Activated CD8-positive, alpha-beta T cell treated with anti-CD3 and anti-CD28 coated beads for 36 hours (primary cell): ENCODE measurements at regions of chr2 and their contacts with region 1.

Region 1: GRCh38 chr2:206783718-206784117 is 18.3 kb downstream of the FASTKD2 start:
- DNase-seq: no peak
- ATAC-seq: peak; percentile 42
- H3K4me3 Mint-ChIP-seq: no peak overlapping the region
- H3K27ac Mint-ChIP-seq: no peak overlapping the region
- H3K4me1 Mint-ChIP-seq: peaks cover 21% of the 10 kb centered on the region
- H3K27me3 Mint-ChIP-seq: no peaks in the 10 kb centered on the region
- CTCF ChIP-seq: no peak

Region 2: GRCh38 chr2:206378835-206379234 is 404.9 kb before region 1 on chr2:
- CTCF ChIA-PET with region 1: no interaction called
- POLR2A ChIA-PET with region 1: no interaction called
- intact Hi-C with region 1: no loop called
- DNase-seq: no peak
- ATAC-seq: no peak
- H3K4me3 Mint-ChIP-seq: no peak overlapping the region
- H3K27ac Mint-ChIP-seq: no peak overlapping the region
- H3K4me1 Mint-ChIP-seq: no peaks in the 10 kb centered on the region
- H3K27me3 Mint-ChIP-seq: peaks cover 10% of the 10 kb centered on the region
- CTCF ChIP-seq: no peak

Region 3: DNA sequence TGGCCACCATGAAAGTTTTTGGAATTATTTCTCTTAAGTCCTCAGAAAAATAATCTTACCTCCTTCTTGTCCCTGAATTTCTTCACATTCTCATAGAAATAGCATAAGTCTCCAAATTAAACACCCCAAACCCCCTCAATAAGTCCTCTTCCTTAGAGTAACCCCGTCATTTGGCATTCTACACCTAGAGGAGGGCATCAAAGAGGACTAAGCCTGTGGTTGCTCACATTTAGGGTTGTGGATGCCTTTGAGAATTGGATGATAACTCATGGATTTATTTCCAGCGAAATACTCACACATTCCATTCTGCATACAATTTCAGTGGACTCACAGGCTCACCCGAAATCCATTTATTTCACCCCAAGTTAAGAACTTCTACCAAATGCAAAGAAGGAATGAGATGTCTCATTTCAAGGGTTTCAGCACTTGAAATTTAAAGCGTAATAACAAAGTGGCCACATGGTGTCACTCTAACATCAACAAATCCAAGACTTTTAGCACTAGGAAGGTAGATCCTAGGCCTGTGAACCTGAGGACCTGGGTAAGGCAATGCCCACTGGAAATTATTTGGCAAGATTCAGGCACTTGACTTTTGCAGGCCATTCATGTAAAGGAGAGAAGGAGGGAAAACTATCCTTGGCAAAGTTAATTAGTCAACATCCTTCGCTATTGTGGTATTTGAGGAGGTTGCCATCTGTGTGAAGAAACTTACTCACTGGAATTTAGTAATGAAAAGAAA is 90.2 kb before region 1 on chr2:
- CTCF ChIA-PET with region 1: interaction called, 21 read pairs
- POLR2A ChIA-PET with region 1: no interaction called
- intact Hi-C with region 1: loop called (anchors 5 kb)
- DNase-seq: peak; percentile 33
- ATAC-seq: peak; percentile 49
- H3K4me3 Mint-ChIP-seq: no peak overlapping the region
- H3K27ac Mint-ChIP-seq: no peak overlapping the region
- H3K4me1 Mint-ChIP-seq: peaks cover 3% of the 10 kb centered on the region
- H3K27me3 Mint-ChIP-seq: no peaks in the 10 kb centered on the region
- CTCF ChIP-seq: peak; percentile 76

Region 4: DNA sequence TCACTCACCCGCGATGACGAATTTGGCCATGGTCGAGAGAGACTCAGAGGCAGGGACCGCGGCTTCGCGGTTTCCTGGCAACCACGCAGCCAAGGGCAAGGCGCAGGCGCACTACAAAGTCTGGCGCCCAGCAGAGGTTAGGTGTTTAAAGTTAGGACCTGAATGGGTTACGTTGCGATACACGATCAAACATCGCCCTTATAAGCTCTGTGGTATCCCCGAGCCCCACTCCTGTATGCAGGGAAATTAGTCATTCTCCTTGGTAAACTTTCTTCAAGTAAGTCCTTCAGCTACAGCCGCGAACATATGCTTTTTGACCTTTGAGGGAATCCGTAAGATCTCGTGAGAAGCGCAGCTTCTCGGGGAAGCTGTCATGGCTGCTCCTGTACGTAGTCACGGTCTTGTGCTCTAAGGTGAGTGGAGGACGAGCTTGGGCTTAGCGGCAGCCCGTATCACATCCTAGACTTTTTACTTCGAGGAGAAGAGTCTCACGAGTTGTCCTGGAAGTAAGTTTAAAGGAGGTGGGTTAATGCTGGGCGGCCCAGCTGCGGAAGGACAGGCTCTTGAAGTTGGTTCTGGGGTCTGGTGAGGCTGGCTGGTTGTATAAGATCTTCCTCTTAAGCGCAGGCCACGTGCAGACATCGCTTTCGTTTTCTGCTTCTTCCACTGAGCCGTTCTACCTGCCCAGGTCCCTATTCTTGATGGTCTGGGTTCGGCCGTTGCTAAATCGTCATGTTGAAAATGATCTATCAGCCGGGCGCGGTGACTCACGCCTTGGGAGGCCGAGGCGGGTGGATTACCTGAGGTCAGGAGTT is 18.3 kb before region 1 on chr2 and contains the starts of genes FASTKD2 and MDH1B:
- CTCF ChIA-PET with region 1: interaction called, 41 read pairs
- POLR2A ChIA-PET with region 1: interaction called, 6 read pairs
- intact Hi-C with region 1: no loop called
- DNase-seq: peak; percentile 93
- ATAC-seq: peak; percentile 89
- H3K4me3 Mint-ChIP-seq: peak within 1 kb of the TSS; percentile 91
- H3K27ac Mint-ChIP-seq: peak within 1 kb of the TSS; percentile 98
- H3K4me1 Mint-ChIP-seq: peaks cover 36% of the 10 kb centered on the region
- H3K27me3 Mint-ChIP-seq: no peaks in the 10 kb centered on the region
- CTCF ChIP-seq: no peak
- total RNA-seq, gene FASTKD2: 32.8 to 33.7 TPM
- total RNA-seq, gene MDH1B: 0.56 to 0.92 TPM